CD14-positive monocyte (primary cell): ENCODE measurements at regions of chr21 and their contacts with region 1.

Region 1: GRCh38 chr21:31098576-31099005 is 60.3 kb upstream of the KRTAP19-8 start:
- DNase-seq: peak; percentile 75 to 82 (median 82)
- H3K4me3 ChIP-seq: no peak overlapping the region
- H3K4me3 Mint-ChIP-seq: no peak overlapping the region
- H3K27ac ChIP-seq: no peak overlapping the region
- H3K27ac Mint-ChIP-seq: peak overlapping the region in 5 of 7 donors; percentile 54 to 86 (median 72)
- H3K4me1 ChIP-seq: peaks cover 13 to 18% of the 10 kb centered on the region in 2 donors
- H3K4me1 Mint-ChIP-seq: peaks cover 28% of the 10 kb centered on the region
- H3K27me3 ChIP-seq: no peaks in the 10 kb centered on the region
- H3K27me3 Mint-ChIP-seq: peaks cover 3 to 10% (median 8%) of the 10 kb centered on the region in 3 donors
- CTCF ChIP-seq: peak; percentile 90

Region 2: GRCh38 chr21:30962013-30962412 is 136.6 kb before region 1 on chr21:
- intact Hi-C with region 1: no loop called
- DNase-seq: no peak
- H3K4me3 ChIP-seq: no peak overlapping the region
- H3K4me3 Mint-ChIP-seq: no peak overlapping the region
- H3K27ac ChIP-seq: no peak overlapping the region
- H3K27ac Mint-ChIP-seq: peak overlapping the region in 1 of 7 donors; percentile 58
- H3K4me1 ChIP-seq: no peaks in the 10 kb centered on the region
- H3K4me1 Mint-ChIP-seq: no peaks in the 10 kb centered on the region
- H3K27me3 ChIP-seq: no peaks in the 10 kb centered on the region
- H3K27me3 Mint-ChIP-seq: no peaks in the 10 kb centered on the region
- CTCF ChIP-seq: no peak

Region 3: DNA sequence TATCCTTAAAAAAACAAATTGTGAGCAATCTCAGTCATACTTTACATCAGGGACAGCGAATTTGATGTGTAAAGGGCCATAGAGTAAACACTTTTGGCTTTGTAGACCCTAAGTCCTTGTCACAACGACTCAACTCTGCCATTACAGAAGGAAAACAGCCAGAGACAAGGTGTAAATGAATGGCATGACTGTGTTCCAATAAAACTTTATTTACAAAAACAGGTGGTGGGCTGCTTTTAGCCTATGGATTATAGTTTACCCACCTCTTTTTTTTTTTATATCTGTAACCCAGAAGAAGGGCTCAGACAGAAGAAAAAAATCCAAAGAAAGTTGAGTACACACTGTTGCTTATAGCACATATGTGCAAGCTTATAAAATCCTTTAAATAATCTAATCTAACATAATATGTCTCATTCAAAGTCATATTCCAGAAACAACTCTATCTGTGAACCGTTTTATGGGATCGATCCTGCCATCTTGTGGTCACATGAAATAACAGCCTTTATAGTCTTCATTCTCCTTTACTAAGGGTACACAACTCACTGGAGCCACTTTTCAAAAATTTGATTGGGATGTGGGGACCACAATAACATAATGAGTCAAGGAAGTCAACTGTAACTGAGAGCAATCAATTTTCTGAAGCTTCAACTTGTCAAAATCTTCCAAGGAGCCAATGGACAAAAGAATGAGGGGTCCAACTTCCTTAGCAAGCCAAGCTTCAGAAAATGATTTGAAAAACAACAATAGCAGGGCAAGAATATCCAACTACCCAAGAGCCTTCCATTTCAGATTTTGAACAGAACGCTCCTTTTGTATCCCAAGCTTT is 81.9 kb after region 1 on chr21:
- intact Hi-C with region 1: loop called (anchors 2 to 5 kb)
- DNase-seq: peak; percentile 19 to 51 (median 26)
- H3K4me3 ChIP-seq: no peak overlapping the region
- H3K4me3 Mint-ChIP-seq: no peak overlapping the region
- H3K27ac ChIP-seq: no peak overlapping the region
- H3K27ac Mint-ChIP-seq: peak overlapping the region in 1 of 7 donors; percentile 3
- H3K4me1 ChIP-seq: peaks cover 30 to 34% of the 10 kb centered on the region in 2 donors
- H3K4me1 Mint-ChIP-seq: peaks cover 33% of the 10 kb centered on the region
- H3K27me3 ChIP-seq: no peaks in the 10 kb centered on the region
- H3K27me3 Mint-ChIP-seq: peaks cover 1 to 4% (median 4%) of the 10 kb centered on the region in 3 donors
- CTCF ChIP-seq: peak; percentile 76

Region 4: DNA sequence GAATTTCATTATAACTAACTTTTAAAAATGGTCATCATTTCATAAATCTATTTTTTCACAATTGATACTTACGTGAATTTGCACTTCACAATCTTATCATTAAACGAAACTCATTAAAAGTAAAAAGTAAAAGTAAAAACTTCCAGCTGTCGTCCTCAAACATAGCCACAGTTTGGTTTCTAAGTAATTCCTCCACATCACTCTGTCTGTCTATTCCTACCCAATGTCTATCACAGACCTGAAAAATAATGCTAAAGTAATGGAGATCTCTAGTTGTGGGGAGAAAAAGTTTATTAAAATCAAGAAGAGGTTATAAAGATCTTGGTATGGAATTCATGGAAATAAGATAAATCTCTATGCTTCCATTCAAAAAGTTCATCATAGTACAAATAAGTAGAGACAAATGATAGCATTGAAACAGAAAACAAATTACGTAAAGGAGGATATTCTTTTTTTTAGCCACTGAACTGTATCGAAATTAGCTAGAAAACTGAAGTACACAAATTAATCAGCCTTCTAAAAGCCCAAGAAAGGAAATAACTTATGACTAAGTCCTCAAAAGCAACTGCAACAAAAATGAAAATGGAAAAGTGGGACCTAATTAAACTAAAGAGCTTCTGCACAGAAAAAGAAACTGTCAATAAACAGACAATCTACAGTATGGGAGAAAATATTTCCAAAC is 96.9 kb after region 1 on chr21:
- intact Hi-C with region 1: no loop called
- DNase-seq: no peak
- H3K4me3 ChIP-seq: no peak overlapping the region
- H3K4me3 Mint-ChIP-seq: no peak overlapping the region
- H3K27ac ChIP-seq: no peak overlapping the region
- H3K27ac Mint-ChIP-seq: no peak overlapping the region
- H3K4me1 ChIP-seq: peaks cover 25 to 27% of the 10 kb centered on the region in 2 donors
- H3K4me1 Mint-ChIP-seq: peaks cover 27% of the 10 kb centered on the region
- H3K27me3 ChIP-seq: no peaks in the 10 kb centered on the region
- H3K27me3 Mint-ChIP-seq: peaks cover 0 to 2% (median 1%) of the 10 kb centered on the region in 3 donors
- CTCF ChIP-seq: no peak

Region 5: DNA sequence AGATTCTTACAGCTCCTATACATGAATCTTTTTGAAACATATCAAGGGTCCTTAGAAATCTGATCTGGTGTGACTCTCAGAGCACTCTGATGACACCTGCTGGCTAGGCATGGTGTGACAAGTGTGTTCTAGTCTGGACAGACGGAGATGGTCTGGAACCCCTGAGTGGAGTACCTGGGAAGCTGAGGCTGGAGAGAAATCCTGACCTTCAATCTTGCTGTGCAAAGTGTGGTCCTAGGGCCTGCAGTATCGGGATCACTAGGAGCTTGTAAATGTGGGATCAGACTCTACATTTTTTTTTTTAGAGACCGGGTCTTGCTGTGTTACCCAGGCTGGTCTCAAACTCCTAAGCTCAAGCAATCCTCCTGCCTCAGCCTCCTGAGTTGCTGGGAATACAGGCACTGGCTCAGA is 482.3 kb after region 1 on chr21:
- intact Hi-C with region 1: loop called in 1 of 2 experiments (anchors 2 kb)
- DNase-seq: peak; percentile 44 to 65 (median 59)
- H3K4me3 ChIP-seq: no peak overlapping the region
- H3K4me3 Mint-ChIP-seq: no peak overlapping the region
- H3K27ac ChIP-seq: no peak overlapping the region
- H3K27ac Mint-ChIP-seq: no peak overlapping the region
- H3K4me1 ChIP-seq: peaks cover 9 to 12% of the 10 kb centered on the region in 2 donors
- H3K4me1 Mint-ChIP-seq: peaks cover 16% of the 10 kb centered on the region
- H3K27me3 ChIP-seq: no peaks in the 10 kb centered on the region
- H3K27me3 Mint-ChIP-seq: peaks cover 0 to 6% (median 2%) of the 10 kb centered on the region in 3 donors
- CTCF ChIP-seq: peak; percentile 93

Region 6: DNA sequence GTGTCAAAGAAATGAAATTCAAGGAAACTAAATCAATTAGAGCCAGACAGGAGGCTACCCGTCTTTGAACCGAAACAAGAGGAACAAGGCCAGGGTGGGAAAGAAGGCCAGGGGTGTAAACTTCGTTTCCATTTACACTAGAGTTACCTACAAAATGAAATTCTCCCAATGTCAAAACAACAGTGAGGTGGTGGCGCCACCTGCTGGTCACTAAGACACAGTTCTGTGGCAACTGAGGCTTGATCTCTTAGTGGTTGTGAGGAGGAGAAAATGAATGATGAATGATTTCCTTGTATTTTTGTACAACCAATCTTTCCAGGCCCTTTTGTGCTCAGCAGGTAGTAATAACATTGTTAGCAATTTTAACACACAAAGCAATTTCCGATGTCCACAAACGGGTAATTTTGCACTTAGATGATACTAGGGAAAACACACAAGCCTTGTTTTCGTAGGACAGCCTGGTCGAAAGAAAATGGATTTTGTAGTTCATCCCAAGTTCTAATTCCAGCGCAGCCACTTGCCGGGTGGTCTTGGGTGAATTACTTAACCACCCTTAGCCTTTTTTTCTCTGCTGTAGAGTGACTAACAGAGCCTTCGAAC is 506.1 kb after region 1 on chr21:
- intact Hi-C with region 1: loop called (anchors 10 kb)
- DNase-seq: peak; percentile 49 to 75 (median 67)
- H3K4me3 ChIP-seq: no peak overlapping the region
- H3K4me3 Mint-ChIP-seq: no peak overlapping the region
- H3K27ac ChIP-seq: no peak overlapping the region
- H3K27ac Mint-ChIP-seq: peak overlapping the region in 1 of 7 donors; percentile 33
- H3K4me1 ChIP-seq: no peaks in the 10 kb centered on the region
- H3K4me1 Mint-ChIP-seq: peaks cover 5% of the 10 kb centered on the region
- H3K27me3 ChIP-seq: no peaks in the 10 kb centered on the region
- H3K27me3 Mint-ChIP-seq: peaks cover 0 to 7% (median 2%) of the 10 kb centered on the region in 3 donors
- CTCF ChIP-seq: peak; percentile 89